ENCODE measurements at regions of chr4 and their contacts with region 1.

Region 1: DNA sequence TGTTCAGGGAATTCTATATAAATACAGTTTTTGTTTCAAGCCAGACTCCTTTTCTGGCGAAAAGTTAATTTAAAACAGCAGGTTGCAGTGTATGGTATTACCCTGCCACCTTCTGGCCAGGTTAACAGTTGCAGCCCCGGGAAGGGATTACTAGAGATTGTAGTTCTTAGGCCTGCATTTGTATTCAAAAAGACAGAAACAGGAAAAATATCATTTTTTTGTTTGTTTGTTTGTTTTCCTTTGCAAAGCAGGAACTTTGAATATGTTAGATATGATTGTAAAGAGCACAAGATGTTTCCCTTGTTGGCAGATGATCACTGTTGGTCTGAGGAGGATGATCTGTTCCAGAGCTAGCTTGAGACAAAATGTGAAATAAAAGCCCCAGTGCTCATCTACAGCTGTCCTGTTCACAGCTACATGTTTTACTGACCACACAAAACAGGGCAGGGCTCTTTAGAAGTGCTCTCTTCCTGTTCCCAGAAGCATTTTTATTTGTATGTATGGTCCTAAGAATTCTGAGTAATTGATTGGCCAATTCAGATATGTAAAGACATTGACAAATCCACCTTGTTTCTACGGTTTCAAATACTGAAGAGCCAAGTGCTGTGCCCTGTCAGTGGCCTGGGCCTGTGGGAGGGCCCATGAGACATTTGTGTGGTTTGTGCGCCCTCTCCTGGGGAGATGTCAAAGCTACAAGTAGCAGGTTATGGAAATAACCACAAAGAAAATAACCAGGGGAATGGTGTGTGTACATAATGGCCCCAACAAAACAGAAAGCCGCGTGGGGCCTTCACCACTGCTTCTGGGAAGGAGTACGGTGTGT is 57.9 kb downstream of the CLDN22 start:
- DNase-seq: peak; percentile 72
- H3K4me3 ChIP-seq: no peak overlapping the region; a peak in 1 of 4 replicates
- H3K27ac ChIP-seq: peak overlapping the region; percentile 20 to 31; a peak in 2 of 4 replicates
- H3K4me1 ChIP-seq: peaks cover 5 to 23% of the 10 kb centered on the region in 2 experiments; a peak in 2 of 4 replicates
- H3K27me3 ChIP-seq: no peaks in the 10 kb centered on the region
- CTCF ChIP-seq: peak; percentile 80
- EP300 ChIP-seq: no peak
- RAD21 ChIP-seq: peak; percentile 89

Region 2: DNA sequence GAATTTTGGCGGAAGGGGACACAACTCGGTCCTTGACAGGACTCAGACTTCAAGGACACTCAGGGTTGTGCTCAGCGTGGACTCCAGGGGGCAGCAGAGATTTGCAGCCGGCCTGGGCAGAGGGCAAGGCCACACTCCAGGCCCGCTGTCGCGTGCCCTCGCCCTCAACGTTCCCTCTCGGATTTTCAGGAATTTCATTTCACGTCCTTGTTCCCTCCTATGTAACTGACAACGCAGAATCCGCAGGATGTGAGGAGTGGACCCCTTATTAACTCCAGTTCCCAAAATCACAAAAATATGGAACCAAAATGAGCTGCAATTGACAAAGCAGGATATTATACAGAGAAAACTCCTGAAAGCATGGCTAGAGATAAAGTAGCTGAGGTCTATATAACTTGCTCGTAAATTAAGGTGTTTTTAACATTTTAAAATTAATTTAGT is 323.9 kb before region 1 on chr4:
- CTCF ChIA-PET with region 1: interaction called, 90 read pairs
- POLR2A ChIA-PET with region 1: no interaction called
- DNase-seq: peak; percentile 84
- H3K4me3 ChIP-seq: peak overlapping the region in 1 of 2 experiments; percentile 11; a peak in 1 of 4 replicates
- H3K27ac ChIP-seq: no peak overlapping the region
- H3K4me1 ChIP-seq: no peaks in the 10 kb centered on the region
- H3K27me3 ChIP-seq: no peaks in the 10 kb centered on the region; the same call in 1 of the 2 replicates
- CTCF ChIP-seq: peak; percentile 96
- EP300 ChIP-seq: no peak
- RAD21 ChIP-seq: peak; percentile 91

Region 3: GRCh38 chr4:183074296-183074990 is 187.7 kb before region 1 on chr4:
- CTCF ChIA-PET with region 1: interaction called, 82 read pairs
- POLR2A ChIA-PET with region 1: no interaction called
- DNase-seq: no peak
- H3K4me3 ChIP-seq: no peak overlapping the region
- H3K27ac ChIP-seq: no peak overlapping the region
- H3K4me1 ChIP-seq: peaks cover 0 to 10% of the 10 kb centered on the region in 2 experiments; a peak in 1 of 4 replicates
- H3K27me3 ChIP-seq: no peaks in the 10 kb centered on the region
- CTCF ChIP-seq: no peak
- EP300 ChIP-seq: no peak
- RAD21 ChIP-seq: no peak

Region 4: GRCh38 chr4:183098723-183099536 is 163.2 kb before region 1 on chr4 and contains the start of gene WWC2:
- CTCF ChIA-PET with region 1: interaction called, 16 read pairs
- POLR2A ChIA-PET with region 1: no interaction called
- DNase-seq: peak; percentile 92
- H3K4me3 ChIP-seq: peak within 1 kb of the TSS; percentile 86 to 94
- H3K27ac ChIP-seq: peak within 1 kb of the TSS; percentile 86 to 96
- H3K4me1 ChIP-seq: peaks cover 2 to 38% of the 10 kb centered on the region in 2 experiments
- H3K27me3 ChIP-seq: no peaks in the 10 kb centered on the region
- CTCF ChIP-seq: no peak
- EP300 ChIP-seq: no peak; a peak in 1 of 4 replicates
- RAD21 ChIP-seq: no peak
- polyA plus RNA-seq, gene WWC2: 18.4 and 19.0 TPM in 2 replicates

Region 5: DNA sequence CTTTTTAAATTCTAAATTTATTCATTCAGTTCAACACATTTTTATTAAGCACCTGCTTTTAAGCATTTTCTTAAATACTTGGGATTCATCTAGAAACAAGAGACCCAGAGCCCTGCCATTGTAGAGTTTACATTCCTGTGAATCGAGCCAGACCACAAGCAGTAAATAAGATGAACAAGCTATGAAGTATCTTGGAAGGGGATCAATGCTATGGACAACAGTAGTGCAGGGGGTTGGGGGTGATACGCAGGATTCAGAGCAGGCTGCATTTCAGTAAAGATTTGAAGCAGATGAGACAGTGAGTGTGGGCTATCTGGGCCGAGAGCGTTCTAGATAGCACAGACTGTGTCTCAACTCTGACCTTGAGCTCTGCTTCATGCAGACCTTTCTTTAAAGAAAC is 22.8 kb after region 1 on chr4:
- CTCF ChIA-PET with region 1: interaction called, 12 read pairs
- POLR2A ChIA-PET with region 1: no interaction called
- DNase-seq: no peak
- H3K4me3 ChIP-seq: no peak overlapping the region
- H3K27ac ChIP-seq: no peak overlapping the region
- H3K4me1 ChIP-seq: no peaks in the 10 kb centered on the region
- H3K27me3 ChIP-seq: no peaks in the 10 kb centered on the region
- CTCF ChIP-seq: no peak
- EP300 ChIP-seq: no peak
- RAD21 ChIP-seq: no peak

Region 6: GRCh38 chr4:183407128-183407585 is 145.0 kb after region 1 on chr4:
- CTCF ChIA-PET with region 1: interaction called, 14 read pairs
- POLR2A ChIA-PET with region 1: interaction called, 3 read pairs
- DNase-seq: peak; percentile 92
- H3K4me3 ChIP-seq: peak overlapping the region; percentile 52 to 74
- H3K27ac ChIP-seq: peak overlapping the region; percentile 70 to 86
- H3K4me1 ChIP-seq: peaks cover 0 to 13% of the 10 kb centered on the region in 2 experiments; a peak in 1 of 4 replicates
- H3K27me3 ChIP-seq: no peaks in the 10 kb centered on the region
- CTCF ChIP-seq: peak; percentile 93
- EP300 ChIP-seq: no peak
- RAD21 ChIP-seq: peak; percentile 78

Measured in SK-N-SH (cell line).